ENCODE measurements at regions of chr19 and their contacts with region 1.

Region 1: DNA sequence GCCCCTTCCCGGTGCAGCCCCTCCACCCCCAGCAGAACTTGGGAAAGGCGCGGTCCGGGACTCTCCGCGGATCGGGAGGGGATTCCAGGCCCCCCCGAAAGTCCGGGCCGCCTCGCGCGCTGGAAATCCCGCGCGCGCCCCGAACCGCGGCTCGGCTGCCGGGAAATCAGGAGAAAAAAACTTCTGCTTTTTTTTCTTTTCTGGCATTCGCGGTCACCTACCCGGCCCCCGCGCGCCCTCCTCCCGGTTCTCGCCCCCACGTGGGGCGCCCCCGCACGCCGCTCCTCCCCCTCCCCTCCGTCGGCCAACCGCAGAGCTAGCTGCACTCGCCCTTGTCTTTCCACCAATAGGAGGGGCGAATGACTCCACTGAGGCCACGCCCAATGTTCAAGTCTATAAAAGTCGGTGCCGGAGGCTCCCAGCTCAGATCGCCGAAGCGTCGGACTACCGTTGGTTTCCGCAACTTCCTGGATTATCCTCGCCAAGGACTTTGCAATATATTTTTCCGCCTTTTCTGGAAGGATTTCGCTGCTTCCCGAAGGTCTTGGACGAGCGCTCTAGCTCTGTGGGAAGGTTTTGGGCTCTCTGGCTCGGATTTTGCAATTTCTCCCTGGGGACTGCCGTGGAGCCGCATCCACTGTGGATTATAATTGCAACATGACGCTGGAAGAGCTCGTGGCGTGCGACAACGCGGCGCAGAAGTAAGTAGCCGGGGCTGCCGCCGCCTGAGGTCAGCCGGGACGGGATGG is at the start of gene GADD45B:
- DNase-seq: peak in 1 of 2 donors; percentile 98
- H3K4me3 ChIP-seq: peak within 1 kb of the TSS; percentile 62 to 98
- H3K27ac ChIP-seq: peak within 1 kb of the TSS; percentile 85
- H3K4me1 ChIP-seq: peaks cover 41% of the 10 kb centered on the region
- H3K27me3 ChIP-seq: no peaks in the 10 kb centered on the region
- CTCF ChIP-seq: peak in 1 of 3 experiments; percentile 15
- POLR2A ChIP-seq: peak; percentile 100
- total RNA-seq, gene GADD45B: 181 TPM

Region 2: DNA sequence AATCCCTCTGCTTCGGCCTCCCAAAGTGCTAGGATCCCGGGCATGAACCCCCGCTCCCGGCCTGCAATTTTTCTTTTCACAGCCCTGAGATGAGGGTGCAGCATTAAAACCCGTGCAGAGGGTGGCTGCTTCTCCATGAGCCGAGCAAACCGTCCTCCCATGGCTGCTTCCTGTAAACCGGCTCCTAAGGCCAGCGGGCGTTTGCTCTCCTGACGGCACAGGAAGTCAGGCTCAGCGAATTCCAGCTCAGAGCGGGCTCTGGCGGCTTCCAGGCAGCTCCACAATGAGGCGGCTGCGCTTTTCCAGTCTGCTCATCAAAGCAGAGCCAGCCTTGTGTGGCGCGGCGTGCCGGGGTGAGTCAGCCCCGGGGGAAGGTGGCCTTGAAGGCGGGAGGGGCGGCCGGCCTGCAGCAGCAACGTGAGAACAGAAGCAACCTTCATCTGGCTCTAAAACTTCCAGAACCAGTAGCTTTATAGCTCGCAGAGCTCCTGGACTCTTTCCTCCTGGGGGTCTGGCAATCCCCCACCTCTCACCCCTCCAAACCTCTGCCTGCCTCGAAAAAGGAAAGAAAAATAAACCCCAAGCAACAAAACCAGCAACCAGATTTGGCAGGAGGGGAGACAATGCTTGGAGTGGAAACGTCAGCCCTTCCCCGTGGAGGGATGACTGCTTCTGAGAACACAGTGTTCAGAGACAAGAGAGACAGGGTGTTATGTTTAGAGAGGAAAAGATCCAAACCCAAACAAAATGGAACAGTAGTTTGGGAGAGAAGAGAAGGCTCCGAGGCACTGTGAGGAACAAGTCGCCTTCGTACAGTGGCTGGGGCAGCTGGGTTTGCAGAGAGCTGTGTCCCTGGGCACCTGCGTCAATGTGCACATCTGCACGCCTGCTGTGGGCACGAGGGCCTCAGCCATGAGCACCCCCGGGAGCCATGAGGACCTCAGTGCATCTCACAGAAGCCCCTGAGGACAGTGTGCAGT is 67.9 kb after region 1 on chr19:
- intact Hi-C with region 1: loop called (anchors 2 kb)
- DNase-seq: peak in 1 of 2 donors; percentile 95
- H3K4me3 ChIP-seq: peak overlapping the region; percentile 18 to 20
- H3K27ac ChIP-seq: peak overlapping the region; percentile 74
- H3K4me1 ChIP-seq: peaks cover 74% of the 10 kb centered on the region
- H3K27me3 ChIP-seq: no peaks in the 10 kb centered on the region
- CTCF ChIP-seq: no peak
- POLR2A ChIP-seq: no peak

Region 3: GRCh38 chr19:2578901-2579677 is 103.2 kb after region 1 on chr19:
- intact Hi-C with region 1: loop called (anchors 1 kb)
- DNase-seq: peak in 1 of 2 donors; percentile 95
- H3K4me3 ChIP-seq: peak overlapping the region; percentile 40 to 57
- H3K27ac ChIP-seq: peak overlapping the region; percentile 79
- H3K4me1 ChIP-seq: peaks cover 34% of the 10 kb centered on the region
- H3K27me3 ChIP-seq: no peaks in the 10 kb centered on the region
- CTCF ChIP-seq: peak; percentile 70 to 96 (median 89)
- POLR2A ChIP-seq: no peak

Region 4: DNA sequence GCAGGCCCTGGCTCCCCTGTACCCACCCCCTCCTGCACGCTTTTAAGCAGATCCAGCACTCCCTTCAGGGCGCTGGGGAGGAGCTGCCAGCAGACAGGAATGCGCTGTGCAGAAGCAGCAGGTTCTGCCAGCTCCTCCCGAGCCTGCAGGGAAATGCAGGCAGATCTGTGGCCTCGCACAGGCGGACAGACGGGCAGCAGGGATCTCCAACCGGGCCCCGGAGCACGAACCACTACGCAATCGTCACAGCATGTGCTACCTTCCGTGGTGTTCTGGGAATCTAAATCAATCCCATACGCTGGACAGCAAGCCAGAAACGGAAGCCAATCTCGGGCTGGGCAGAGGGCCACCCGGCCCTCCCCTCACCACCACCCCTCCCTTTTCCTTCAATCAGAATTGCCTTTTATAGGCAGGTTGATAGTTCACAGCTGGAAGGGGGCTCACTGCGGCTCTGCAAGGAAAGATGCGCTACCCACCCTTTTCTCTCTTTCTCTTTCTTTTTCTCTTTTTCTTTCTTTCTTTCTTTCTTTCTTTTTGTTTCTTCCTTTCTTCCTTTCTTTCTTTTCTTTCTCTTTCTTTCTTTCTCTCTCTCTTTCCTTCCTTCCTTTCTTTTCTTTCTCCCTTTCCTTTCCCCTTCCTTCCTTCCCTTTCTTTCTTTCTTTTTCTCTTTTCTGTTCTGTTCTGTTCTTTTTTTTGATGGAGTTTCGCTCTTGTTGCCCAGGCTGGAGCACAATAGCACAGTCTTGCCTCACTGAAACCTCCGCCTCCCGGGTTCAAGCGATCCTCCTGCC is 126.7 kb after region 1 on chr19:
- intact Hi-C with region 1: loop called (anchors 2 kb)
- DNase-seq: peak in 1 of 2 donors; percentile 93
- H3K4me3 ChIP-seq: peak overlapping the region; percentile 12 to 39
- H3K27ac ChIP-seq: peak overlapping the region; percentile 64
- H3K4me1 ChIP-seq: peaks cover 32% of the 10 kb centered on the region
- H3K27me3 ChIP-seq: no peaks in the 10 kb centered on the region
- CTCF ChIP-seq: no peak
- POLR2A ChIP-seq: no peak

Region 5: DNA sequence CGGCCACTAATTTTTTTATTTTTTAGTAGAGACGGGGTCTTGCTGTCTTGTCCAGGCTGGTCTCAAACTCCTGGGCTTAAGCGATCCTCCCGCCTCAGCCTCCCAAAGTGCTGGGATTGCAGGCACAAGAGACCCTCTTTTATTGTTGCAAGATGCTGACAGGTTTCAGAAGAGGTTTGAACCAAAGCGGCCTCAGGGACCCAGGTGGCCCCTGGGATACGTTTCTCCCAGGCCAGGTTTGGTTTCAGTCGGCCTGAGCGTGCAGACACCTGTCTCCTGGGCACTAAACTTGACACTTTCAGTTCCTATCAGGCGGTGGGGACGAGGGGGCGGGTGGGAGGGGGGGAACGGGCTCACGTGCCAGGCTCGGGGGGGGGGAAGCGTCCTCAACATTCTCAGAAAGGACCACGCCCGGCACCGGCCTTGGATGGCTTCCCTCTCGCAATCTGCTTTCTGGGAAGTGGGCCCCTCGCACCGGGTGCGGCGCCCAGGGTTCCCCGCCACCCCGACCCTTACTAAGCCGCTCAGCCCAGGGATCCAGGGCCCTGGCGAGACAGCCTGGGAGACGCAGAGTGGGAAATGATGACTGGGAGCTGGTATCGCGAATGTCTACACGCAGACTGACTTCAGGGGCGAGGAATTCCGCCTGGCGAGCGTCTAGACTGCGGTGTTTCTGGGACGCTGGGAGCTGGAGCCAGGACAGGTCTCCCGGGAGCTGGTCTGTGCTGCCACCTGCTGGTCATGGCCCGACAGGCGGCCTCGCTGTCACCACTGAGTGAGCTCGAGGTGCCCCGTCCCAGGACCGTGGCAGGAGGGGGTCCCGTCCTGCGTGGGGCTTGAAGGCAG is 135.0 kb after region 1 on chr19:
- intact Hi-C with region 1: loop called (anchors 2 kb)
- DNase-seq: no peak
- H3K4me3 ChIP-seq: peak overlapping the region; percentile 47 to 63
- H3K27ac ChIP-seq: peak overlapping the region; percentile 77
- H3K4me1 ChIP-seq: peaks cover 15% of the 10 kb centered on the region
- H3K27me3 ChIP-seq: no peaks in the 10 kb centered on the region
- CTCF ChIP-seq: peak; percentile 98 to 99 (median 98)
- POLR2A ChIP-seq: no peak

Region 6: DNA sequence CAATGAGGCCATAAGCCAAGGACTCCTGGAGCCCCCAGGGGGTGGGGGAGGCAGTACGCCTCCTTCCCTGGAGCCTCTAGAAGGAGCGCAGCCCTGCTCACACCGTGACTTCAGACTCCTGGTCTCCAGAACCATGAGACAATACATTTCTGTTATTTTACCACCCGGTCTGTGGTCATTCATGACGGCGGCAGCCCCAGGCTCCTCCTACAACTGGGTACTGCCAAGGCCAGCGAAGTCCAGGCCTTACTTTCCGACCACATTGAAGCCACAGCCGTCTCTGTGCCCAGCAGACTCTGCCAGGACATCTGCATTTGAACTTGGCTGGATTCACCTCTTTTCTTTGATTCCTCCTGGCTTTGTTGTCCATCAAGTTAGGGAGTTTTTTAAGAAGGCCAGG is 216.1 kb after region 1 on chr19:
- intact Hi-C with region 1: no loop called
- DNase-seq: no peak
- H3K4me3 ChIP-seq: no peak overlapping the region
- H3K27ac ChIP-seq: no peak overlapping the region
- H3K4me1 ChIP-seq: peaks cover 9% of the 10 kb centered on the region
- H3K27me3 ChIP-seq: no peaks in the 10 kb centered on the region
- CTCF ChIP-seq: no peak
- POLR2A ChIP-seq: no peak

Measured in vagina (tissue), 2 donors.